ENCODE measurements at regions of chrX and their contacts with region 1.

Region 1: GRCh38 chrX:23667239-23668177 is at the start of gene PRDX4:
- DNase-seq: peak; percentile 82
- H3K4me3 Mint-ChIP-seq: peak within 1 kb of the TSS; percentile 84
- H3K27ac Mint-ChIP-seq: peak within 1 kb of the TSS; percentile 90
- H3K4me1 Mint-ChIP-seq: peaks cover 30% of the 10 kb centered on the region
- H3K27me3 Mint-ChIP-seq: no peaks in the 10 kb centered on the region
- total RNA-seq, gene PRDX4: 39.6 to 40.0 TPM

Region 2: GRCh38 chrX:21985332-21985777 is 1682.2 kb before region 1 on chrX:
- CTCF ChIA-PET with region 1: no interaction called
- intact Hi-C with region 1: loop called (anchors 5 kb)
- DNase-seq: peak; percentile 77
- H3K4me3 Mint-ChIP-seq: no peak overlapping the region
- H3K27ac Mint-ChIP-seq: peak overlapping the region; percentile 8
- H3K4me1 Mint-ChIP-seq: peaks cover 14% of the 10 kb centered on the region
- H3K27me3 Mint-ChIP-seq: no peaks in the 10 kb centered on the region

Region 3: GRCh38 chrX:23773601-23774175 is 106.2 kb after region 1 on chrX:
- CTCF ChIA-PET with region 1: no interaction called
- intact Hi-C with region 1: loop called (anchors 2 kb)
- DNase-seq: peak; percentile 67
- H3K4me3 Mint-ChIP-seq: no peak overlapping the region
- H3K27ac Mint-ChIP-seq: peak overlapping the region; percentile 92
- H3K4me1 Mint-ChIP-seq: peaks cover 18% of the 10 kb centered on the region
- H3K27me3 Mint-ChIP-seq: no peaks in the 10 kb centered on the region

Region 4: DNA sequence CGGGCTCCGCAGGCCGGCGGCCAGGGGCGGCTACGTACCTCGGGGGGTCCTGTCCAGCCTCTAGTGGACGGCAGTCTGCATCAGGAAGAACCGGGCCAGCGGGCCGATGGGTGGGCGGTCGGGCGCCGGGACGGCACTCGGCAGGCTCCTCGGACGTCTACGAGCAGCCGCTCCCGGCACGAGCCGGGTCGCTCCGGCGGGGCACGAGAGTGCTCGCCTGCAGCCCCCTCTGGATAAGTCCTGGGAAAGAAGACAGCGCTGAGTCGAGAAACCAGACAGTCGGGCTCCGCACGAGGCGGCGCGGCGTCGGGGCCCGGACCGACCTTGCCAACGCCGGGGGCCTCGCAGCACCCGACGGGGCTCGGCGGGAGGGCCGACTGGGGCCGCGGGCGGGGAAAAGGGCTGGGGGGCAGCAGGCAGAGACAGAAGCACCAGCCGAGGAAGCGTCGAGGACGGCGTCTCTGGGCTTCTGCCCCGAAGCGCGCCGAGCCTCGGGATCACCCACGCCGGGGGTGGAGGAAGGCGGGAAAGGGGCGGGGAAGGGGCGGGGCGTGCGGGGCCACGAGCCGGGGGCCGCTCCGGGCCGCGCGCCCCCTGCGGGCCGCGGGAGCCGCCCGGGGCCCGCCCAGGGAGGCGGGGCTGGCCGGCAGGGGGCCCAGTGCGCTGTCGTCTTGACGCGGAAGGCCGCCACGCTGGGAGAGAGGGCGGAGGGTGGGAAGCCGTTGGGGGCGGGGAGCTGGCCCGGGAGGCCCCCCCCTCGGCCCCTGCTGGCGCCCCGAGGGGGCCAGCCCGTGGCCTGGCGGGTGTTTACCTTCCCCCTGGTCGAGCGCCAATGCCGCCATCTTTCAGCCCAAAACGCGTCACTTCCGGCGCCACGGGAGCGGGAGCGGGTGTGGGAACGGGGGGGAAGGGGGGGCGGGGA is 357.6 kb after region 1 on chrX:
- CTCF ChIA-PET with region 1: interaction called, 3 read pairs
- intact Hi-C with region 1: loop called (anchors 10 kb)
- DNase-seq: peak; percentile 89
- H3K4me3 Mint-ChIP-seq: peak overlapping the region; percentile 85
- H3K27ac Mint-ChIP-seq: peak overlapping the region; percentile 71
- H3K4me1 Mint-ChIP-seq: peaks cover 20% of the 10 kb centered on the region
- H3K27me3 Mint-ChIP-seq: no peaks in the 10 kb centered on the region

Region 5: DNA sequence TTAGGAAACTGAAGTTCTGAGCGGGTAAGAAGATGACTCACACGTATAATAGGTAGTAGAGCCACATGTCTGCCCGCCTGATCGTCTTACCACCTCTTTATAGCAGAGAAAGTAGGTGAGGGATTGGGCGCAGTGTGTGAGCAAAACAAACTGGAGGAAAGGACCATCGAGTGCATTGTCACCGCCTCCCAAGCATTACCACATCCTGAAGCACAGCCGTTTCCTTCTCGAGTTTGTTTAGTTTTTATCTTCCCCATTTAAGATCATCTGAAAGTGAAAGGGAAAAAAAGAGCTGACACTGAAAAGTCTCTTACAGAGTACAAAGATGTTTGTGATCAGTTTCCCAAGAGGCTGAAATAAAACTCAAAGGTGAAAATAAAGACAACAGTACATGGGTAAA is 812.4 kb after region 1 on chrX:
- CTCF ChIA-PET with region 1: no interaction called
- intact Hi-C with region 1: loop called (anchors 10 kb)
- DNase-seq: peak; percentile 86
- H3K4me3 Mint-ChIP-seq: peak overlapping the region; percentile 69
- H3K27ac Mint-ChIP-seq: peak overlapping the region; percentile 96
- H3K4me1 Mint-ChIP-seq: peaks cover 69% of the 10 kb centered on the region
- H3K27me3 Mint-ChIP-seq: no peaks in the 10 kb centered on the region